ENCODE measurements at regions of chr5 and their contacts with region 1.

Region 1: DNA sequence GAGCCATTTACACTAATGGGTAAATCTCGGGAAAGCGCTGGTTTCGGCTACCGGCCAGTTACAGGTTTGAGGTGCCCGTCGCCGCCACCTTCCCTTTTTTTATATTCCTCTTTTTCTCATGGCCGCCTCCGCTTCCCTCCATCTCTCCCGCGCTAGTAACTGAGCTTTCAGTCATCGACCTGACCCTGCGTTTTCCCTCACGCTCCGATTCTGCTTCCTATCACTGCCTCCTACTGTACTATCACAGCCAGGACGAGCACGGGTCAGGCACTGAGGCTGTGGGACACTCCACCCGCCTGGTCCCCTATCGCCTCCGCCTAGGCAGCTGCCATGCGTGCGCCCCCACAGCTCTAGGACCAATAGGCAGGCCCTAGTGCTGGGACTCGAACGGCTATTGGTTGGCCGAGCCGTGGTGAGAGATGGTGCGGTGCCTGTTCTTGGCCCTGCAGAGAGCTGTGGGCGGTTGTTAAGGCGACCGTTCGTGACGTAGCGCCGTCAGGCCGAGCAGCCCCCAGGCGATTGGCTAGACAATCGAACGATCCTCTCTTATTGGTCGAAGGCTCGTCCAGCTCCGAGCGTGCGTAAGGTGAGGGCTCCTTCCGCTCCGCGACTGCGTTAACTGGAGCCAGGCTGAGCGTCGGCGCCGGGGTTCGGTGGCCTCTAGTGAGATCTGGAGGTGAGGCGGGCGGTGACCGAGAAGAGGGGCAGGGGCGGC is at the start of gene HMGCR:
- DNase-seq: peak; percentile 100
- H3K4me3 ChIP-seq: peak within 1 kb of the TSS; percentile 72 to 96 (median 84)
- H3K27ac ChIP-seq: peak within 1 kb of the TSS; percentile 93
- H3K4me1 ChIP-seq: peaks cover 35% of the 10 kb centered on the region
- H3K27me3 ChIP-seq: no peaks in the 10 kb centered on the region
- CTCF ChIP-seq: peak; percentile 24 to 51
- total RNA-seq, gene HMGCR: 106 to 142 TPM

Region 2: DNA sequence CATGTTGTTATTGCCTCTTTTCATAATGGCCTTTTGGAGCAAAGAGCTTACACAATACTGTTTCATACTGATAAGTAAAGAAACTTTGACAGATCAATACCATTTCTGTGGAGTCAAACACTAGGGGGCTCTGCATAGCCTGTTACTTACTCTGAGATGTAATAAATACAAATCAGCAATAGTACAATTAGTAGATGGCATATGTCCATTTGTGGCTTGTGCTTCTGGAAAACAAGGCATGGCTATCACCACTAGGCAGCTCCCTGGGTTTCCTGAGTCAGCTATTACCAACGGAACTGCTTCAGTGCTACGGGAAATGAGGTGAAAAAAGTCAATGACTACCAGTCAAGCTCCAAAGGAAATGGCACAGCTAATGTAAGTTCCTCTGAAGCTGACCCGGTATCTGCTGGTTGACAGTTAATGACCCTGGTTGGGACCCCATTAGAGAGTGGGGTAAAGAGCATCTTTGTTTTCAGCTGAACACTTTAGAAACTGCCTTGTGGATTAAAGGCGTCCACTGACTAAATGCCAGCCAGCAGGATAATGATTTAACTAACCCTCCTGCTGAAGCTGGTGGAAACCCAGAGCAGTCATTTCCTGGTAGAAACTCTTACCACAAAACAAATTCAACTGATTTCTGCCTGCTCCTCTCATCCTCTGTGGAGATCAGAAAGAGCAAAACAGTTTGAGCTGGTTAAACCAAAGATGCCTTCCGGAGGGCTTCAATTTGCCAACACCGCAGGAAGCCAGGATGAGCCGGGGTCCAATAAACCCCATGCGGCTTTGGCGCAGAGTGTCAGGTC is 401.6 kb before region 1 on chr5:
- CTCF ChIA-PET with region 1: no interaction called
- dilution Hi-C with region 1: no loop called
- in situ Hi-C with region 1: no loop called
- intact Hi-C with region 1: loop called (anchors 5 kb)
- DNase-seq: peak; percentile 59
- H3K4me3 ChIP-seq: no peak overlapping the region
- H3K27ac ChIP-seq: no peak overlapping the region
- H3K4me1 ChIP-seq: no peaks in the 10 kb centered on the region
- H3K27me3 ChIP-seq: no peaks in the 10 kb centered on the region
- CTCF ChIP-seq: peak; percentile 36 to 52

Region 3: DNA sequence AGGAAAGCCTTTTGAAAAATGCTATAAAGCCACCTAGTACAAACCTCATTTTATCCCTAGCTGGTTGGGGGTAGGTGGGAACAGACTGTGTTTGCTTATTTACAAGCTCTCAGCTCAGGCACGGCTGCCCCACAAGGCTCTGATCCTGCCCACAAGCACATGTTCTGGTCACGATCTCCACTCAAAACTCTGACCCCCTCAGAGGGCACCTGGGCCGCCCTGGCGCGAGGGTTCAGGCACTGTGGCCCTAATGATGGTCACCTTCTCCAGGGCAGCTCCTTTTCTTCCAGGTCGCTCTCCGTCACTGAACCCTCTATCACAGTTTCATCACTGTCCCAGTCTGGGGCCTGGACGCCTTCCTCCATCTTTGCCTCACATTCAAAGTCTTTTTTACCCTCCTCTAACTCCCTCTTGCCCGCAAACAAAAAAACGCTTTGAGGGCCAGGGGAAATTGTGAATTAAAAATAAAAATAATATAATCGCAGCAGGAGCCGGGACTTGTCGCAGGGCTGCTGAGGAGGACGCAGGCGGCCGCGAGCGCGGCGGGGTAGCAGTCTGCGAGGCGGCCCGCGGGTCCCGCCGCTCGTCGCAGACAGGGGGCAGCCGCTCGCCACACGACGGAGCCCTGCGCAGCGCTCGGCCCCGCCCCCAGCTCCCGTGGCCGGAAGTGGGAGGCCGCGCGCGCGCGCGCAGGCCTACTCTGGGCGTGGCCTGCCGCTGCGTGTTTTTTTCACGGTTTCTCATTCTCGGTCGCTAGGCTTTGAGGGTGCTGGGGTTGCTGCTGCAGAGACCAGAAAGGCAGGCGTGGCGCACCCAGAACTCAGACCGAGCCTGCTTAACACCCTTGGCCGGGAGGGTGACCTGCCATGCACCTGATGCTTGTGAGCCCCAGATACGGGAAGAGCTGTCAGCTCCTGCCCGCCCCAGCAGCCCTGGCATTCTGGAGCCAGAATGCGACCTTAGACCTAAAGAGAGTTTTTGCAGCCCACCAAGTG is 100.2 kb before region 1 on chr5 and contains the start of gene ANKRD31:
- CTCF ChIA-PET with region 1: no interaction called
- dilution Hi-C with region 1: no loop called
- in situ Hi-C with region 1: no loop called
- intact Hi-C with region 1: loop called (anchors 2 kb)
- DNase-seq: peak; percentile 64
- H3K4me3 ChIP-seq: peak within 1 kb of the TSS; percentile 69 to 72 (median 71)
- H3K27ac ChIP-seq: no peak within 1 kb of the TSS
- H3K4me1 ChIP-seq: peaks cover 29% of the 10 kb centered on the region
- H3K27me3 ChIP-seq: no peaks in the 10 kb centered on the region
- CTCF ChIP-seq: peak; percentile 53 to 62
- total RNA-seq, gene ANKRD31: 0.26 to 0.33 TPM

Region 4: GRCh38 chr5:75320341-75320740 is 16.4 kb before region 1 on chr5:
- CTCF ChIA-PET with region 1: no interaction called
- dilution Hi-C with region 1: no loop called
- in situ Hi-C with region 1: no loop called
- intact Hi-C with region 1: loop called (anchors 1 kb)
- DNase-seq: no peak
- H3K4me3 ChIP-seq: no peak overlapping the region
- H3K27ac ChIP-seq: peak overlapping the region; percentile 99
- H3K4me1 ChIP-seq: peaks cover 18% of the 10 kb centered on the region
- H3K27me3 ChIP-seq: no peaks in the 10 kb centered on the region
- CTCF ChIP-seq: no peak

Region 5: GRCh38 chr5:75381456-75381855 is 44.7 kb after region 1 on chr5:
- CTCF ChIA-PET with region 1: no interaction called
- dilution Hi-C with region 1: no loop called
- in situ Hi-C with region 1: no loop called
- intact Hi-C with region 1: no loop called
- DNase-seq: no peak
- H3K4me3 ChIP-seq: no peak overlapping the region
- H3K27ac ChIP-seq: no peak overlapping the region
- H3K4me1 ChIP-seq: no peaks in the 10 kb centered on the region
- H3K27me3 ChIP-seq: no peaks in the 10 kb centered on the region
- CTCF ChIP-seq: no peak

Region 6: DNA sequence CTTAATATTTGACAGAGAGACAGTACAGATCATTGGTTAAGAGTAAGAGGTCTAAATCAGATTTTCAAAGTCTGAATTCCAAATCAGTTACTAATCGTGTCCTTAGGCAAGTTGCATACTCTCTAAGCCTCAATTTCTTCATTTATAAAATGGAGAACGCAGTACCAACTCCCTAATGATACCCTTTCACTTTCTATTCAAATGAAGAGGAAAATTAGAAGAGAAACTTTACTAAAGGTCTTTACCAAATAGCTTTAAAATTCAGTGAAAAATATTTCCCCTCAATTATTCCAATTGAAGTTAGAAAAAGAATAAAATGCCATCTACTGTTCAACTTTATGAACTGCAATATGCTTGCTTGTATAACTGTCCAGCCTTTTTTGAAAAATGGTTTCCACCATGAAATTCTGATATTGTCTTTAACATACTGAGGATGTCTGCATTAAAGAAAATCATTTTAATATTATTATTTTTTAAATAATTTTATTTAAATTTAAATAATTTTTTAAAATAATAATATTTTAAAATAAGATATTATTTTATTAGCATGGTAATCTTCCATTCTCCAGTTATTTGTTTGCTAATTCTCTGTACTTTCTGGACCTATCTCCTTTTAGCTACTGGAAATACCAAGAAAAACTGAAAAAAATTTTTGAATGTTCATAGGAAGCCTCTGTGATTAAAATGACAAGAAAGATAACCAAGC is 344.5 kb after region 1 on chr5:
- CTCF ChIA-PET with region 1: no interaction called
- dilution Hi-C with region 1: no loop called
- in situ Hi-C with region 1: no loop called
- intact Hi-C with region 1: loop called (anchors 10 kb)
- DNase-seq: peak; percentile 40
- H3K4me3 ChIP-seq: peak overlapping the region; percentile 33 to 52 (median 34)
- H3K27ac ChIP-seq: peak overlapping the region; percentile 22
- H3K4me1 ChIP-seq: peaks cover 6% of the 10 kb centered on the region
- H3K27me3 ChIP-seq: no peaks in the 10 kb centered on the region
- CTCF ChIP-seq: peak; percentile 58 to 61

Measured in mammary epithelial cell (primary cell).